MCF 10A (cell line): ENCODE measurements at regions of chr12 and their contacts with region 1.

Region 1: GRCh38 chr12:8860165-8860961 is 37.9 kb downstream of the A2ML1 start:
- DNase-seq: peak; percentile 46
- H3K4me3 Mint-ChIP-seq: no peak overlapping the region
- H3K27ac Mint-ChIP-seq: no peak overlapping the region
- H3K4me1 Mint-ChIP-seq: no peaks in the 10 kb centered on the region
- H3K27me3 Mint-ChIP-seq: no peaks in the 10 kb centered on the region
- CTCF ChIP-seq: peak; percentile 41

Region 2: GRCh38 chr12:8675591-8676036 is 184.7 kb before region 1 on chr12:
- CTCF ChIA-PET with region 1: interaction called, 46 read pairs
- POLR2A ChIA-PET with region 1: no interaction called
- intact Hi-C with region 1: no loop called
- DNase-seq: no peak
- H3K4me3 Mint-ChIP-seq: no peak overlapping the region
- H3K27ac Mint-ChIP-seq: no peak overlapping the region
- H3K4me1 Mint-ChIP-seq: peaks cover 6% of the 10 kb centered on the region
- H3K27me3 Mint-ChIP-seq: no peaks in the 10 kb centered on the region
- CTCF ChIP-seq: no peak

Region 3: DNA sequence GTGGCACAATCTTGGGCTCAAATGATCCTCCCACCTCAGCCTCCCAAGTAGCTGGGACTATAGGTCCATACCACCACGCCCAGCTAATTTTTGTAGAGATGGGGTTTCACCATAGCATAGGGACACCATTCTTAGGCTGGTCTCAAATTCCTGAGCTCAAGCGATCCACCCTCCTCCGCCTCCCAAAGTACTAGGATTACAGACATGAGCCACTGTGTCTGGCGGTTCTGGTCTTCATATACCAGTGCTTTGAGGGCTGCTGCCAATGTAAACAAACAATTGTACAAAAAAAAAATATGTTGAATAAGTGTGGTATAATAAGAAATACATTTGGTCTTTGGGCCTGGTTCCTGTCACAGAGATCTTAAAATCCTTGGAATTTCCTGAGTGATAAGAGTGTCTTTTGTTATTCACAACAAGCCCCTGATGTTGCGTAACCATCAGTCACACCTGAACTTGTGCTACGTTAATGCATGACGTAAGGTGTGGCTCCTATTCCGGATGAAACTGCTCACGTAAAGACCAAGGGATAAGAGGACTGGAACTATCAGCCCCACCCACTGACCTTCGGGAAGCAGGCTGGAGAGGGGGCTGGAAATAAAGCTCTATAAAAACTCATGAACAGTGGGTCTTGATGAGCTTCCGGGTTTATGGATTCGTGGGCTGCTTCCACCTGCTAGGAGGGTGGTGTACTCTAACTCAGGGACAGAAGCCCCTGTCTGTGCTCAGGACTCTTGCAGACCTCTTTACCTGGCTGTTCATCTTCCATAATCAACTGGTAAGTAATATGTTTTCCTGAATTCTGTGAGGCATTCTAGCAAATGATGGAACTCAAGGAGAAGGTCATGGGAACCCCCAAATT is 179.1 kb before region 1 on chr12:
- CTCF ChIA-PET with region 1: interaction called, 46 read pairs
- POLR2A ChIA-PET with region 1: no interaction called
- intact Hi-C with region 1: loop called (anchors 1 kb)
- DNase-seq: peak; percentile 79
- H3K4me3 Mint-ChIP-seq: peak overlapping the region; percentile 67
- H3K27ac Mint-ChIP-seq: peak overlapping the region; percentile 63
- H3K4me1 Mint-ChIP-seq: peaks cover 19% of the 10 kb centered on the region
- H3K27me3 Mint-ChIP-seq: no peaks in the 10 kb centered on the region
- CTCF ChIP-seq: no peak

Region 4: GRCh38 chr12:8697476-8698131 is 162.8 kb before region 1 on chr12 and contains the start of gene RIMKLB:
- CTCF ChIA-PET with region 1: interaction called, 14 read pairs
- POLR2A ChIA-PET with region 1: no interaction called
- intact Hi-C with region 1: no loop called
- DNase-seq: peak; percentile 60
- H3K4me3 Mint-ChIP-seq: peak within 1 kb of the TSS; percentile 93
- H3K27ac Mint-ChIP-seq: peak within 1 kb of the TSS; percentile 46
- H3K4me1 Mint-ChIP-seq: peaks cover 13% of the 10 kb centered on the region
- H3K27me3 Mint-ChIP-seq: no peaks in the 10 kb centered on the region
- CTCF ChIP-seq: no peak
- total RNA-seq, gene RIMKLB: 32.7 and 34.4 TPM in 2 replicates

Region 5: DNA sequence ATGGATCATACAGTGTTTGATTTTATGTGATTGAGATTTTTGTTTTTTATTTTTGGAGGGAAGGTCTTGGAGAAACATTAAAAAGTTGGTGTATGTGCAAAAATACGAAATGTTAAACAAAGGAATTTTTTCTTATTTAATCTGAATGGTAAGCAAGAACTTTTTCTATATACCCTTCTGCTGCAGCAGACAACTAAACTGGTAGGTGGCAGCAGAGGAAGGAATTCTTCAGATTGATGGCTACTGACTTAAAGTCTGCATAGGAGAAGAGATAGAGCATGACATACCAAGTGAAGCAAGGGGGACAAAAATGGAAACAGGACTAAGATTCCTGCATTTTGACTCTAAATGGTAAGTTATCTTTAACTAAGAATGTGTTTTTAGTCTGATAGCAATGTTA is 80.0 kb before region 1 on chr12:
- CTCF ChIA-PET with region 1: interaction called, 13 read pairs
- POLR2A ChIA-PET with region 1: no interaction called
- intact Hi-C with region 1: no loop called
- DNase-seq: peak; percentile 26
- H3K4me3 Mint-ChIP-seq: no peak overlapping the region
- H3K27ac Mint-ChIP-seq: no peak overlapping the region
- H3K4me1 Mint-ChIP-seq: no peaks in the 10 kb centered on the region
- H3K27me3 Mint-ChIP-seq: no peaks in the 10 kb centered on the region
- CTCF ChIP-seq: peak; percentile 19

Region 6: DNA sequence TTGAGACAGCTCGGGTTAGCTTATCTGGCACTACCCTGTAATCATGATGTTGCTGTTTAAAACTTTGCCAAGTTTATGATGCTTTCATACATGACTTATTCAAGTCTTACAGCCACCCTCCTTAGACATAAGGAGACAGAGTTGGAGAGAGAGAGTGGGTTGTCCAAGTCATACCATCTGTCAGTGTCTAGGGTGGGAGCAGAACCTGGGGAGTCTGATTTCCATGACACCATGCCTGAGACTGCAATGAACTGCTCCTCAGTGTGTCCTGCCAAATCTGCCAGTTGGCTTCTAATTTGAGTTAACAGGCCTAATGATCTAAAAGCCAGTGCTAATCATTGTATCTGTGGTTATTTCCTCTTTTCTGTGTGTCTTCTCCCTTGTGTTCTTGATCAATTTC is 10.2 kb after region 1 on chr12:
- CTCF ChIA-PET with region 1: interaction called, 16 read pairs
- POLR2A ChIA-PET with region 1: interaction called, 3 read pairs
- intact Hi-C with region 1: no loop called
- DNase-seq: no peak
- H3K4me3 Mint-ChIP-seq: no peak overlapping the region
- H3K27ac Mint-ChIP-seq: no peak overlapping the region
- H3K4me1 Mint-ChIP-seq: no peaks in the 10 kb centered on the region
- H3K27me3 Mint-ChIP-seq: no peaks in the 10 kb centered on the region
- CTCF ChIP-seq: no peak